ENCODE measurements at regions of chr22 and their contacts with region 1.

Region 1: DNA sequence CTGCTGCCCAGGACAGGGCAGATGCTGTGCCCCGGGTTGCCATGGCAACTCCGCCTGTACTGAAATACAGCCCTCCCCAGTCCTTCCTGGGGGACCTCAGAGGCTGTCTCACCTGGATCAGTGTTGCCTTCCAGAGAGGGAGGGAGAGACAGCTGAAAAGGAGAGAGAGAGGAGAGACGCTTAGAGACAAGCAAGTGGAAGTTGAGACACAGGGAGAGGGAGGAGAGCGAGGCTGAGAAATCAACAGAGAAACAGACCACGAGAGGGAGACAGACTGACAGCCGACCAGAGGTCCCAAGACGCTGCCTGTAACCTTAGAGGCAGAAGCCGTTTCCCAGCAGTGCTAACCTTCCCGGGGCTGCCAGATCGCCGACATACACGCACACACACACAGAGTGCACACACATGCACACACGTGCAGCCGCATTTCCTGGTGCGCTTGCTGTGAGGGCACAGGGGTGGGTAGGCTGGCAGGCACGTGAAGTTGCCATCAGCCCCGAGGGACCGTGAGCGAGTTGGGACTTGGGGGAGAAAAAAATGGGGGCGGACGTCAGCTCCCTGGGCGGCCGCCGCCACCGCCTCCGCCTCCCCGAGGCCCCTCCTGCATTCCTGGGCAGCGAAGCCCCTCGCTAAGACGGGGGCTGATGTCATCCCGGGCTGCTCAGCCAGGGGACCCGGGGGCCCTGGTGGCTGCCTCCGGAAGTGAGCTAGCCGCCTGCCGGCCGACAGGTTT is 88.6 kb upstream of the CRYBB3 start:
- DNase-seq: peak; percentile 50 to 58 (median 53)
- H3K4me3 ChIP-seq: peak overlapping the region; percentile 33 to 66
- H3K4me3 Mint-ChIP-seq: peak overlapping the region; percentile 85 to 92 (median 88)
- H3K27ac ChIP-seq: no peak overlapping the region
- H3K27ac Mint-ChIP-seq: peak overlapping the region; percentile 16 to 89 (median 85)
- H3K4me1 ChIP-seq: peaks cover 7% of the 10 kb centered on the region
- H3K4me1 Mint-ChIP-seq: peaks cover 6 to 20% (median 13%) of the 10 kb centered on the region in 4 donors
- H3K27me3 ChIP-seq: no peaks in the 10 kb centered on the region
- H3K27me3 Mint-ChIP-seq: no peaks in the 10 kb centered on the region

Region 2: DNA sequence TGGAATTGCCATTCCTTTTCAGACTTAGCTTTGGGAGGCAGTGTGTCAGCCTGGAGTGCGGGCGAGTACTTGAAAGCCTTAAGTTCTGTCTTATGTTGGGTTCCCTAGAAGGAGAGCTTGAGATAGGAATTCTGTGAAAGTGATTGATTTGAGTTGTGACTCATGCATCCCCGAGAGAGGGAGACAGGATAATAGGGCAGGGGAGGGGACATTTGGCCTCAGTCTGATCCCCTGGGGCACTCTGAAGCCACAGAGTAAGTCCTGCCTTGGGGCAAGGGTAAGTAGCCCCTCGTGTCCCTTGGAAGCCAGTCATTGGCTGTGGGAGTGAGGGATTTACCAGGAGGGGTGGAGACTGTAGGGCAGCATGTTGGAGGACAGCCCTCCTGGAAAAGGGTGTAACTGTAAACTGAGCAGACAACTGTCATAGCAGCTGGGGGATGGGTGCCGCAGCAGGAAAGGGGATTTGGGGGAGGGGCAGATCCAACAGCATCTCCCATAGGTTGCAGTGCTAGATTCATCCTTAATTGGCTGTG is 114.5 kb before region 1 on chr22:
- CTCF ChIA-PET with region 1: no interaction called
- POLR2A ChIA-PET with region 1: no interaction called
- intact Hi-C with region 1: no loop called
- DNase-seq: no peak
- H3K4me3 ChIP-seq: no peak overlapping the region
- H3K4me3 Mint-ChIP-seq: no peak overlapping the region
- H3K27ac ChIP-seq: no peak overlapping the region
- H3K27ac Mint-ChIP-seq: no peak overlapping the region
- H3K4me1 ChIP-seq: no peaks in the 10 kb centered on the region
- H3K4me1 Mint-ChIP-seq: peaks cover 0 to 11% (median 4%) of the 10 kb centered on the region in 4 donors
- H3K27me3 ChIP-seq: no peaks in the 10 kb centered on the region
- H3K27me3 Mint-ChIP-seq: peaks cover 8 to 26% of the 10 kb centered on the region in 2 donors

Region 3: GRCh38 chr22:25062386-25063085 is 48.5 kb before region 1 on chr22:
- CTCF ChIA-PET with region 1: interaction called, 27 read pairs
- POLR2A ChIA-PET with region 1: interaction called, 10 read pairs
- intact Hi-C with region 1: loop called (anchors 1 kb)
- DNase-seq: peak; percentile 75 to 91 (median 78)
- H3K4me3 ChIP-seq: peak overlapping the region; percentile 14 to 17
- H3K4me3 Mint-ChIP-seq: peak overlapping the region; percentile 53 to 93 (median 80)
- H3K27ac ChIP-seq: peak overlapping the region; percentile 16
- H3K27ac Mint-ChIP-seq: peak overlapping the region; percentile 62 to 100 (median 92)
- H3K4me1 ChIP-seq: peaks cover 60% of the 10 kb centered on the region
- H3K4me1 Mint-ChIP-seq: peaks cover 32 to 67% (median 50%) of the 10 kb centered on the region in 4 donors
- H3K27me3 ChIP-seq: no peaks in the 10 kb centered on the region
- H3K27me3 Mint-ChIP-seq: peaks cover 1 to 2% of the 10 kb centered on the region in 2 donors

Region 4: GRCh38 chr22:25067851-25068421 is 43.1 kb before region 1 on chr22:
- CTCF ChIA-PET with region 1: interaction called, 9 read pairs
- POLR2A ChIA-PET with region 1: interaction called, 24 read pairs
- intact Hi-C with region 1: loop called (anchors 2 kb)
- DNase-seq: peak; percentile 91 to 95 (median 93)
- H3K4me3 ChIP-seq: no peak overlapping the region
- H3K4me3 Mint-ChIP-seq: peak overlapping the region; percentile 84 to 95 (median 90)
- H3K27ac ChIP-seq: peak overlapping the region; percentile 77
- H3K27ac Mint-ChIP-seq: peak overlapping the region; percentile 95 to 99 (median 97)
- H3K4me1 ChIP-seq: peaks cover 83% of the 10 kb centered on the region
- H3K4me1 Mint-ChIP-seq: peaks cover 57 to 91% (median 77%) of the 10 kb centered on the region in 4 donors
- H3K27me3 ChIP-seq: no peaks in the 10 kb centered on the region
- H3K27me3 Mint-ChIP-seq: no peaks in the 10 kb centered on the region

Region 5: DNA sequence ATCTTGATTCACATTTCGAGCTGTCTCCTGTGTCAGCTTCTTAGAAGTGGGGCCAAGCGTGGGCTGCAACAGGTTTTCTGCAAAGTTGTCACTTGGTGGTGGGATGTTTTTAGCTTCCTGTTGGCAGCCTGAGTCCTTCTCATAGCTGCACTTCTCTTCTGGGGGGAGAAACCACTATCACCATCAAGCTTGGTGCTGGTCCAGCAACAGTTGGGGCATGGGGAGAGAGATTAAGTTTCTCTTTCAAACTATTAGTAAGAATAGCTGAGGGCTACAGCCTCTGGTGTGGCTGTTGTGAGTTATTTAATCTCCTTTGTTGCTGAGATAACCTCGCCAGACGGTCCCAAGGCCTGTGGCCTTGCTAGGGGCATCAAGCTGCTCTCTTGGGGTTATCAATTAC is 34.7 kb before region 1 on chr22:
- CTCF ChIA-PET with region 1: interaction called, 15 read pairs
- POLR2A ChIA-PET with region 1: interaction called, 4 read pairs
- intact Hi-C with region 1: no loop called
- DNase-seq: no peak
- H3K4me3 ChIP-seq: no peak overlapping the region
- H3K4me3 Mint-ChIP-seq: peak overlapping the region; percentile 8 to 79 (median 70)
- H3K27ac ChIP-seq: no peak overlapping the region
- H3K27ac Mint-ChIP-seq: peak overlapping the region; percentile 47 to 87 (median 74)
- H3K4me1 ChIP-seq: peaks cover 48% of the 10 kb centered on the region
- H3K4me1 Mint-ChIP-seq: peaks cover 38 to 56% (median 44%) of the 10 kb centered on the region in 4 donors
- H3K27me3 ChIP-seq: no peaks in the 10 kb centered on the region
- H3K27me3 Mint-ChIP-seq: no peaks in the 10 kb centered on the region

Region 6: DNA sequence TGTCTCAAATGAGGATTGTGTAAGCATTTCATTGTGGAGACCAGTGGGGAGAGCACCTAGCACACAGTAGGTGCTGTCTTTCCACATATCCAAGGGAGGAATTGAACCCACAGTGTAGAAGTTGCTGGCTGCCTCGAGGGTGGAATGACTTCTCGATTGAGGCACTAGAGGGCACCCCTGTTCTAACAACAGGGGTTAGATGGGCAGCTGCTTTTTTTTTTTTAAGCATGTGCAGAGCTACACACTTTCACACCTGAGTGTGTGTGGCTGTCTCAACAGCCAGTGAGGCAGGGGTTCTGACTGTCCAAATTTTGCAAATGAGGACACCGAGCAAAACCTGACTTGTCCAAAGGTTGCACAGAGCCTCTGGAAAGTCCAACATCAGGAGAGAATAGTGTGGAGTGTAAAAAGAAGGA is 29.6 kb before region 1 on chr22:
- CTCF ChIA-PET with region 1: interaction called, 15 read pairs
- POLR2A ChIA-PET with region 1: interaction called, 3 read pairs
- intact Hi-C with region 1: no loop called
- DNase-seq: peak; percentile 40 to 52 (median 44)
- H3K4me3 ChIP-seq: no peak overlapping the region
- H3K4me3 Mint-ChIP-seq: no peak overlapping the region
- H3K27ac ChIP-seq: no peak overlapping the region
- H3K27ac Mint-ChIP-seq: peak overlapping the region in 2 of 7 donors; percentile 24 to 30
- H3K4me1 ChIP-seq: peaks cover 26% of the 10 kb centered on the region
- H3K4me1 Mint-ChIP-seq: peaks cover 28 to 44% (median 31%) of the 10 kb centered on the region in 4 donors
- H3K27me3 ChIP-seq: no peaks in the 10 kb centered on the region
- H3K27me3 Mint-ChIP-seq: no peaks in the 10 kb centered on the region